PC-3 (cell line): ENCODE measurements at regions of chr10 and their contacts with region 1.

Region 1: GRCh38 chr10:103086799-103087198 is 106.3 kb downstream of the NT5C2 start:
- DNase-seq: no peak
- ATAC-seq: no peak
- H3K4me3 ChIP-seq: no peak overlapping the region
- H3K27ac ChIP-seq: no peak overlapping the region
- H3K4me1 ChIP-seq: no peaks in the 10 kb centered on the region
- H3K27me3 ChIP-seq: no peaks in the 10 kb centered on the region
- CTCF ChIP-seq: no peak

Region 2: GRCh38 chr10:102773986-102774737 is 312.6 kb before region 1 on chr10:
- CTCF ChIA-PET with region 1: no interaction called
- POLR2A ChIA-PET with region 1: no interaction called
- intact Hi-C with region 1: no loop called
- DNase-seq: no peak
- ATAC-seq: no peak
- H3K4me3 ChIP-seq: no peak overlapping the region
- H3K27ac ChIP-seq: no peak overlapping the region
- H3K4me1 ChIP-seq: peaks cover 9% of the 10 kb centered on the region
- H3K27me3 ChIP-seq: no peaks in the 10 kb centered on the region
- CTCF ChIP-seq: no peak

Region 3: GRCh38 chr10:102822222-102822621 is 264.6 kb before region 1 on chr10:
- CTCF ChIA-PET with region 1: no interaction called
- POLR2A ChIA-PET with region 1: no interaction called
- intact Hi-C with region 1: no loop called
- DNase-seq: no peak
- ATAC-seq: no peak
- H3K4me3 ChIP-seq: no peak overlapping the region
- H3K27ac ChIP-seq: no peak overlapping the region
- H3K4me1 ChIP-seq: no peaks in the 10 kb centered on the region
- H3K27me3 ChIP-seq: no peaks in the 10 kb centered on the region
- CTCF ChIP-seq: no peak

Region 4: DNA sequence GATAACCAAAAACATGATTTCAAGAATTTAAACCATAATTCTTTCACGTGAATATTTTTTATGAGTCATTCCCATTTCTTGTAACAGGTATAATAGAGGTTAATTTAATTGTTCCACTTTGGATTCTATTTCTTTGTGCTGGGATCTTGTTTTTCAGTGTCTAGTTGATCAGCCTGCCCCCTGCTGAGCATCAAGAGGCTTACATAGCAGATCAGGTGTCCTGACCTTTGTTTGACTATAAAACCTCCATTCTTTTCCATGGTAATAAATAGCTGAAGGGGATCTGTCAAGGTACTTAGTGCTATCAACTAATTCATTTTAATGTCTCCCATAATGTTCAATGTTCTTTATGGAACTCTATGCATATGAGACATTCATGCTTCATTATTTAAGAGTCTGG is 994.0 kb after region 1 on chr10:
- CTCF ChIA-PET with region 1: no interaction called
- POLR2A ChIA-PET with region 1: interaction called, 14 read pairs
- intact Hi-C with region 1: no loop called
- DNase-seq: peak; percentile 38
- ATAC-seq: no peak
- H3K4me3 ChIP-seq: no peak overlapping the region
- H3K27ac ChIP-seq: no peak overlapping the region
- H3K4me1 ChIP-seq: peaks cover 16% of the 10 kb centered on the region
- H3K27me3 ChIP-seq: no peaks in the 10 kb centered on the region
- CTCF ChIP-seq: peak; percentile 67